Common myeloid progenitor, CD34-positive (primary cell): ENCODE measurements at regions of chr7 and their contacts with region 1.

Region 1: GRCh38 chr7:137656227-137656849 is 190.4 kb downstream of the DGKI start:
- DNase-seq: peak; percentile 67 to 81 (median 76)
- H3K4me3 ChIP-seq: no peak overlapping the region
- H3K27ac ChIP-seq: no peak overlapping the region
- H3K4me1 ChIP-seq: no peaks in the 10 kb centered on the region
- H3K27me3 ChIP-seq: peaks cover 0 to 4% (median 0%) of the 10 kb centered on the region in 5 experiments

Region 2: GRCh38 chr7:137642472-137642871 is 13.9 kb before region 1 on chr7:
- CTCF ChIA-PET with region 1: interaction called, 11 read pairs
- POLR2A ChIA-PET with region 1: no interaction called
- DNase-seq: peak in 2 of 3 donors; percentile 38 to 51
- H3K4me3 ChIP-seq: no peak overlapping the region
- H3K27ac ChIP-seq: no peak overlapping the region
- H3K4me1 ChIP-seq: peaks cover 0 to 3% (median 1%) of the 10 kb centered on the region in 4 experiments
- H3K27me3 ChIP-seq: peaks cover 0 to 27% (median 5%) of the 10 kb centered on the region in 5 experiments

Region 3: DNA sequence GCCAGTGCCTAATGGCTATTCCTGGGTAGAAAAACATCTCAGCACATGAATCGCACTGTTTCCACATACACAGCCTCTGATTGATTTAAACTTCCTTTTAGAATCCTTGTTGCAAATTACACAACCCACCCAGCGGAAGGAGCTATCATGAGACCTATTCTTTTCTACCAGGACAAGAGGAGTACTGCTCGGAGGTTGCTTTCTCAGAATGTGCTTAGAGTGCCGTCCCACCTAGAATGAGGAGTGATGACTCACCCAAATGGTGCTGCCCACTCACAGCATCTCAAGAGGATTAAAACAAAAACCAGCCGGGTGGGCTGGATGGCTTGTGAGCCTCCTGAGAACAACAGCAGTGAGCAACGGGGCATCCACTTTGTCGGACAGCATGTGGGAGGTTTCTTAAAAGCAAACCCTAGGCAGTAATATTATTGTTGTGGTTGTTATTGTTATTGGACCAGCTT is 61.5 kb after region 1 on chr7:
- CTCF ChIA-PET with region 1: no interaction called
- POLR2A ChIA-PET with region 1: no interaction called
- DNase-seq: peak in 1 of 3 donors; percentile 5
- H3K4me3 ChIP-seq: no peak overlapping the region
- H3K27ac ChIP-seq: no peak overlapping the region
- H3K4me1 ChIP-seq: no peaks in the 10 kb centered on the region
- H3K27me3 ChIP-seq: peaks cover 0 to 5% (median 0%) of the 10 kb centered on the region in 5 experiments